Posterior cingulate gyrus (tissue), 11 donors: ENCODE measurements at regions of chrX and their contacts with region 1.

Region 1: DNA sequence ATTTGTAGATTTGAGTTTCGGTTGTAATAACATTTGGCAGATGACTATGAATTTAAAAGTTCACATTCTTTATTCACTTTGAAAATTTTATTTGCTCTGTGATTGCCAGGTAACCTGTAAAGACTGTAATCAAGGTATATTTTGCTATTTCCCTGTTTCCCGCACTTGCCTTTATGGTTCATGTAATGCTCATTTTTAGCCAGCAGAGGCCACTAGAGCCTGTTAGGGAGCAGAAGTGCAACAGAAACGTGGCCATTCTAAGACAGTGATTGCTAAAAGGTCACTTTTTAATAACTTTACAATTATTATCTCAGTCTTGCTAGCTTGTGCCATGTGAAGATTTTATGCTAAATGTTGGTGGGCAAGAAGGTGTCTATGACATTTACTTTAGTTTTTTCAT is 12.4 kb downstream of the YIPF6 start:
- DNase-seq: no peak

Region 2: DNA sequence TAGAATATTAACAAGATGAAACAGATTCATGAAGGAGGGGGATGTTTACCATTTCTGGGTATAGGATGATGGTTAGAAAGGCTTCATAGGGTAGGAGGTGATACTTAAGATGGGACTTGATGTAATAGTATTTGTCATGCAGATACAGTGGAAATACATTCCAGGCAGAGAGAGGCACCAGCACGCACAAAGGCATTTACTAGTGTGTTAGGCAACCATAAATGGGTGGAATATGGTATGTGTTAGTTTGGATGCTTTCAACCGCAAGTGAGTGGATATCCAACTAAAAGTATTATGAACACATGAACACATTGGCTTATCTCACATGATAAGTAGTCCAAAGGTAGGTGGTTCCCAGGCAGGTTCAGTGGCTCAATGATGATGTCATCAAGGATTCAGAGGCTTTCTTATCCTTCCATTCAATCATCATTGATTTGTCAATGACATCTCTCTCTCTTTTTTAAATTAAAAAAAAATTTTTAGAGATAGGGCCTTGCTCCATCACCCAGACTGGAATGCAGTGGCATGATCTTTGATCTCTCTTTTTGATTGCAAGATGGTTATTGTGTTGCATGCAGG is 123.5 kb after region 1 on chrX:
- intact Hi-C with region 1: no loop called
- DNase-seq: no peak

Region 3: GRCh38 chrX:68784816-68785215 is 273.6 kb after region 1 on chrX:
- intact Hi-C with region 1: no loop called
- DNase-seq: no peak

Region 4: DNA sequence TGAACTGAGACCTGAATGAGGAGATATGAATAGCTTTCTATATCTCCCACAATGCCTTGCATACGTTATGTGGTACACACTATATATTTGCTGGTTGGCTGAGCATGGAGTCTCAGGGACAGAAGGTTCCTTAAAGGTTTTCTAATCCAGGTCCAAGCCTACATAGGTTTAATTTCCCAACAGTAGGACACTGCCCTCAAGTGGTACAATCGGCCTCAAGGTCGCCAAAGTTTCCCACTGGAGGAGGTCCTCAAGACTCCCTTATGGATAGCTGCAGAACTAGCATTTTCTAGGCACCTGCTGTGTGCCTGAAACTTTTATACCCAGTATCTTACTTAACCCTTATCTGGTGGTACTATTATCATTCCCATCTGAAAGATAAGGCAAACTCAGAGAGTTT is 296.6 kb after region 1 on chrX:
- intact Hi-C with region 1: loop called (anchors 2 kb)
- DNase-seq: no peak

Region 5: GRCh38 chrX:68978258-68979054 is 467.2 kb after region 1 on chrX:
- intact Hi-C with region 1: no loop called
- DNase-seq: no peak